ENCODE measurements at regions of chr17 and their contacts with region 1.

Region 1: DNA sequence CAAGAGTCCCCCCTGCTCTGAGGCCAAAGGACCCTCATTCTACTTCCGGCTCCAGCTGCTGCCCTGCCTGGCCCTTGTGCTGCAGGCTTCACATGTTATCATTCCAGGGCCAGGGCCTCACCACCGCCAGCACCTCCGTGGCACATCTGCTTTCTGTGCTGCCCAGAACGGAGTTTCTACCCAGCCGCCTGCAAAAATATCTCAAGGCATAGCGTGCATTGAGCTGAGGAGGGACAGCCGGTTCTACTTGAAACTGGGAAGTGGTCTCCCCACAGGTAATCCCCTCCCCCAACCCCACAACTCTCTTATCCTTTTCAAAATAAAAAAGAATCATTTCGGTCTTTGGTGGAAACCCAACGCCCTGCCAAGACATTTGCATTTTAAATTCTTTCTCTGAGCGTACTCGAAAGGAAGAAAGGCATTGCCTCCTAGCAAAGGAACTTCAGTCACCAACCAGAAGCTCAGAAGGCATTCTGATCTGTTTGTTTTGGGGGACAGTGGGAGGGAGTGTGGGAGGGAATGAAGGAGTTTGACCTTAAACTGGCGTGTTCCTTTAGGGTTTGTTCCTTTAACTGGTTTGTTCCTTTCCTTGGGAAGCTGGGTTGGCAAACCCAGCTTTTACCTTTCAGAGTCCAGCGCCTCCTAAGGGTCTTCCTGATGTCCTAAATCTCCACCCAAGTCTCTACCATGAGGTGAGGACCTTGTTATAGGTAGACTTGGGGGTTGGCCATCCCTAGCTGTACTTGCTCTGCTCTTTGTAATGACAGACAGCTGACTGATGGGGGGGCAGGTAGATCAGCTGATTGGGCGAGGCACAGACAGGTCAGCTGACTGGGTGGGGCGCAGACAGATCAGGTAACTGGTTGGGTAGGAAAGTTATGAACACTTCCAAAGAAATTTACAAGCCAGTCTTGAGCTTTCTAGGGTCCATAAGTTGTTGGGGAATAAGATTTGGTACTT is 33.4 kb upstream of the PIK3R6 start:
- DNase-seq: peak; percentile 84
- ATAC-seq: peak; percentile 60
- H3K4me3 ChIP-seq: peak overlapping the region; percentile 6; the same call in 1 of the 2 replicates
- H3K27ac ChIP-seq: peak overlapping the region; percentile 86
- H3K4me1 ChIP-seq: peaks cover 60% of the 10 kb centered on the region
- H3K27me3 ChIP-seq: no peaks in the 10 kb centered on the region
- CTCF ChIP-seq: peak; percentile 16 to 18 (median 17); a peak in 2 of 6 replicates
- EP300 ChIP-seq: peak; percentile 84 to 97
- POLR2A ChIP-seq: peak; percentile 51; the same call in 1 of the 2 replicates
- RAD21 ChIP-seq: peak; percentile 11

Region 2: DNA sequence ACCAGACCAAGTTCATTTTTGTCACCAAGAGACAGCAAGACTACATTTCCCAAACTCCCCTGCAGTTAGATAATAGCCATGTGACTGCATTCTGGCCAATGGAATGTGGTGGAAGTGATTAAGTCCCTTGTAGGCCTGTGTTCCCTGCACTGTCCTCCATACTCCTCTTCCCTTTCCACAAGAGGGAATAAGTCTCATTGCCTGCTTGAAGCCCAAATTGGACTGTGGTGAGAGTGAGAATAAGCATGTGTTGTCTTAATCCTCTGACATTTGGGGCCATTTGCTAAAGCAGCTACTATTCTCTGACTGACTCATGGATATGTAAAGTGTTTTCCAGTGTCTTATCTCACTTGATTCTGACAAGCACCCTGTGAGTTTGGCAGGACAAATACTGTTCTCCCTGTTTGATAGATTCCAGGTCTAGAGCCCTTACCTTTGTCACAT is 54.1 kb before region 1 on chr17:
- CTCF ChIA-PET with region 1: interaction called, 22 read pairs
- POLR2A ChIA-PET with region 1: interaction called, 6 read pairs
- RAD21 ChIA-PET with region 1: interaction called, 11 read pairs
- SMC1A ChIA-PET with region 1: interaction called, 28 read pairs
- in situ Hi-C with region 1: no loop called
- intact Hi-C with region 1: no loop called
- DNase-seq: no peak
- ATAC-seq: peak; percentile 65
- H3K4me3 ChIP-seq: no peak overlapping the region
- H3K27ac ChIP-seq: peak overlapping the region; percentile 42
- H3K4me1 ChIP-seq: peaks cover 42% of the 10 kb centered on the region
- H3K27me3 ChIP-seq: no peaks in the 10 kb centered on the region
- CTCF ChIP-seq: no peak
- EP300 ChIP-seq: no peak
- POLR2A ChIP-seq: no peak
- RAD21 ChIP-seq: no peak

Region 3: DNA sequence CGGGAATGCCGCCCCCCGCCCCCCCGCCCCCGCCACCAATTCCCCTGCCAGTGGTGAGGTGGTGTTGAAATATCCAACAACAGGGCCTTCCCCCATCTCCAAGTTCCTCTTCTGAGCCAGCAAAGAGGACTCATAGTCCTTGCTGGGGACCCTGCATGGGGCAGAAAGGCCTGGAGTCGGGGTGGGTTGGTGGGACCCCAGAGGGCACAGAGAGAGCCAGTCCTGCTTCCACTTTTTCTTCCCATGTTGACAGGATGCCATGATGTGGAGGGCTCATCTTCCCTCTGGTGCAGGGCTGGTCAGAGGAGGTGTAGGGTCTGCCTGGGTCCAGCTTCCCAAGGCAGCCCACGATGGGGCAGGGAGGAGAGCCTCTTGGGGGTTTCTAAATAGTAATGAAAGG is 15.6 kb after region 1 on chr17:
- CTCF ChIA-PET with region 1: interaction called, 45 read pairs
- POLR2A ChIA-PET with region 1: interaction called, 14 read pairs
- RAD21 ChIA-PET with region 1: interaction called, 40 read pairs
- SMC1A ChIA-PET with region 1: interaction called, 47 read pairs
- in situ Hi-C with region 1: no loop called
- intact Hi-C with region 1: loop called (anchors 2 kb)
- DNase-seq: no peak
- ATAC-seq: no peak
- H3K4me3 ChIP-seq: no peak overlapping the region
- H3K27ac ChIP-seq: no peak overlapping the region
- H3K4me1 ChIP-seq: peaks cover 49% of the 10 kb centered on the region
- H3K27me3 ChIP-seq: no peaks in the 10 kb centered on the region
- CTCF ChIP-seq: no peak
- EP300 ChIP-seq: no peak
- POLR2A ChIP-seq: no peak
- RAD21 ChIP-seq: no peak

Region 4: GRCh38 chr17:8941520-8941919 is 40.6 kb after region 1 on chr17:
- CTCF ChIA-PET with region 1: interaction called, 13 read pairs
- POLR2A ChIA-PET with region 1: interaction called, 25 read pairs
- RAD21 ChIA-PET with region 1: interaction called, 14 read pairs
- SMC1A ChIA-PET with region 1: interaction called, 37 read pairs
- in situ Hi-C with region 1: no loop called
- intact Hi-C with region 1: loop called (anchors 1 kb)
- DNase-seq: no peak
- ATAC-seq: peak; percentile 68
- H3K4me3 ChIP-seq: peak overlapping the region; percentile 15; the same call in 1 of the 2 replicates
- H3K27ac ChIP-seq: peak overlapping the region; percentile 94
- H3K4me1 ChIP-seq: peaks cover 45% of the 10 kb centered on the region
- H3K27me3 ChIP-seq: no peaks in the 10 kb centered on the region
- CTCF ChIP-seq: no peak
- EP300 ChIP-seq: peak; percentile 61 to 82
- POLR2A ChIP-seq: 0 out of 2 replicates have a peak, but pooled peaks have one; percentile 13
- RAD21 ChIP-seq: no peak

Region 5: DNA sequence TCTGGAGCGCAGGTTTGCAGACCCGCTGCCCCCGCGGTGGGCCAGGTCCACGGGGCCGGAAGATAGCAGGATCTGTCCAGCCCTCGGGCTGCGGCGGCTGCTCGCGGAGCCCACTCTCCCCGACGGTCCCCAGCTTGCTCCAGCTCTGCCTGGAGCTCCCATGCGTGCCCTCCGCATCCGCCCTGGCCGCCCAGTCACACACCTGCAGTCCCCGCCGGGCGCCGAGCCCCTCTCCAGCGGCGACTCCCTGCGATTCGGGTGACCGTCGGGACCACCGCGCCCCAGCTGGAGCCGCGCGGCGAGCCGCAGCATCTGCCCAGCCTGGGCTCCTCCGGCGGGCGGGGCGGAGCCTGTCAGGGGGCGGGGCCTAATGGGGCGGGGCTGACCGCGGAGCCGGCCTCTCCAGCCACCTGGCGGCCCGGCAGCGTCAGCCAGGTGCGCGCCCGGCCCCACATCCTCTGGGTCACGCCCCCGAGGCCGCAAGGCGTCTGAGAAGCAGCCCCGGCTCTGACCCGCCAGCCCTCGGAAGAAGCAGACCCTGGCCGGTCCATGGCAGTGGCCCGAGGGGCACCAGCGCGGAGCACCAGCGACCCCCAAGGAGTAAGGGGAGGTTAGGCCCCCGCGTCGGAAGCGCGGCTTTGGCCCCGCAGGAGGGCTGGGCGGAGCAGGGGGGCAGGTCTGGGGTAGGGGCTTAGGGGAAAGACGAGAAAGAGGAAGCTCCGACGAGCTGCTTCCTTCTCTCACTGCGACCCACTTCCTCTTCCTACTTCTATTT is 64.7 kb after region 1 on chr17 and contains the start of gene PIK3R5:
- CTCF ChIA-PET with region 1: interaction called, 19 read pairs
- POLR2A ChIA-PET with region 1: interaction called, 18 read pairs
- RAD21 ChIA-PET with region 1: interaction called, 53 read pairs
- SMC1A ChIA-PET with region 1: interaction called, 208 read pairs
- in situ Hi-C with region 1: no loop called
- intact Hi-C with region 1: no loop called
- DNase-seq: no peak
- ATAC-seq: peak; percentile 79
- H3K4me3 ChIP-seq: peak within 1 kb of the TSS; percentile 90
- H3K27ac ChIP-seq: peak within 1 kb of the TSS; percentile 80
- H3K4me1 ChIP-seq: peaks cover 28% of the 10 kb centered on the region
- H3K27me3 ChIP-seq: no peaks in the 10 kb centered on the region
- CTCF ChIP-seq: peak in 1 of 3 experiments; percentile 27; a peak in 2 of 6 replicates
- EP300 ChIP-seq: no peak
- POLR2A ChIP-seq: peak; percentile 87
- RAD21 ChIP-seq: no peak
- polyA plus RNA-seq, gene PIK3R5: 9.5 to 9.6 TPM

Measured in GM12878 (cell line).